BJ (cell line): ENCODE measurements at regions of chr12 and their contacts with region 1.

Region 1: DNA sequence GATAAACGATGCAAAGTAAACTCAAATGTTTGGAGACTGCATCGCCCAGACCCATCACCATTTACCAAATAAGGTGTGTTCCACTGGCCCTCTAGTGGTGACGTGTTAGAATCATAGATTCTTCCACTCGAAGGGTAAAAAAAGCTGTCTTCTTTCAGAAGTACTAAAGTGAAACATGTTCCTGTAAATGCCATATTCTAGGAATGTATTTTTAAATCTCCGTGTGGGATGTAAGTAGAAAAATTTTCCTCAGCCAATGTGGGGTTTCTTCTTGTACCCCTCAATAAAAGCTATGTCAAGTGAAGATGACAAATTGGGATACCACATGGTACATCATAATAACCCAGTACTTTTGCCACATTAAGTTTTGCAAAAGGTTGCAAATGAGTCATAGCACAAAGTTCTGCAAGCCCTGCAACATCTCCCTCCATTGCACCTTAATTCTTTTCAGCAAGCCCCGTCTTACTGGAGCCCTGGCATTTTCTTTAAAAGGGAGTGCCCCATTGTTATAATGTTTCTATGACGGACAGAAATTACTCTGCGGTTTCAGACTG is 100.8 kb downstream of the CCER1 start:
- DNase-seq: no peak
- H3K4me3 ChIP-seq: no peak overlapping the region
- H3K27me3 ChIP-seq: no peaks in the 10 kb centered on the region
- CTCF ChIP-seq: peak; percentile 84

Region 2: DNA sequence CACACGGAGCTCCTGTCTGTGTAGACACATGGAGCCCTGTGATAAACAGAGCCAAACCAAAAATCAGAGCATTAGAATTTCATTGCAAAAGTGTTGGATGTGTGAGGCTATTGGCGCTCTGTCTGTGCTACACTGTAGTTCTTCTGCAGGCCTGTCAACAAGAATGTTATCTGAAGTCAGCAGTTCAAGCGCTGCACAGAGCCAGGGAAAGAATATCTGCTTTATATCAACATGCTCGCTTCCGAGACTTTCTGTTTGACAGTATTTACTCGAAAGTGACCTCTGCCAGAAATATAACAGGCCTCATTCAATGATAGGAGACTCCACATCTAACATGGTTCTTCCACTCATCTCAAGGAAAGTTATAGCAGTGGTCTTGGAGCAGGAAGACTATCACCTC is 17.5 kb before region 1 on chr12:
- CTCF ChIA-PET with region 1: interaction called, 11 read pairs
- POLR2A ChIA-PET with region 1: interaction called, 4 read pairs
- DNase-seq: no peak
- H3K4me3 ChIP-seq: no peak overlapping the region
- H3K27me3 ChIP-seq: no peaks in the 10 kb centered on the region
- CTCF ChIP-seq: no peak

Region 3: DNA sequence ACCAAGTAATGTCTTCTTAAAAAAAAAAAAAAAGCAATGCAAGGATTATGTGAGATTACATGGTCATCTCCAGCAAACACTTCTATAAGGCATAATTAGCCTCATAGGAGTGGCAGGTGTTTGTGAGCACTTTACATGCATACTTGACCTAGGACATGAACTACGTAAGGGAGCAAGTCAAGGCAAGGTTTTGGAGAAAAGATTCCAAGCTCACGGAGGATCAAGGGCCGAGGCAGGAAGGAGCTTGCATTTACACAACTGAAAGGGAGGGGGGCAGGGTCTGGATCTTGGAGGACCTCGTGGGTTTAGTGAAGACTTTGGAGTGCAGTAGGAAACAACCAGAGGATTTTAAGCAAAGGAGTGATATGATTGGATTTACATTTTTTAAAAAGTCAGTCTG is 11.7 kb before region 1 on chr12:
- CTCF ChIA-PET with region 1: interaction called, 17 read pairs
- POLR2A ChIA-PET with region 1: no interaction called
- DNase-seq: no peak
- H3K4me3 ChIP-seq: no peak overlapping the region
- H3K27me3 ChIP-seq: no peaks in the 10 kb centered on the region
- CTCF ChIP-seq: no peak

Region 4: DNA sequence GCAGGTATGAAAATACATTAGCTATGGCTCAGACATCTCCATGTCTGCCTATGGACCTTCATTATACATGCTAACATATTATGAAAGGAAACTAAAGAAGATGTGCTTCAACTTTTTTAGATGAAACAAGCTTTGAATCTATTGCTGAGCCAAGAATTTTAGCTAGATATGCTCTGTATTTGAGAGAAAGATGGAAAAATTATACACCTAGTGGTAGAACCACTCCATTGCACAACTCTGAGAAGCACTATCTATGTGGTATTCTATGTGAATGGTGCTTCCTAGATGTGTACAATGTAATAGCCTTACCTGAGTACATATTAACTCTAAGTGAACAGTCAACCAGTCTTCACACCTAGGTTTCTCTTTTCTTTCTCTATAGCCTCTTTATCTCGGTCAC is 133.3 kb after region 1 on chr12:
- CTCF ChIA-PET with region 1: no interaction called
- POLR2A ChIA-PET with region 1: no interaction called
- DNase-seq: no peak
- H3K4me3 ChIP-seq: no peak overlapping the region
- H3K27me3 ChIP-seq: no peaks in the 10 kb centered on the region
- CTCF ChIP-seq: peak; percentile 21; the same call in 1 of the 2 replicates

Region 5: DNA sequence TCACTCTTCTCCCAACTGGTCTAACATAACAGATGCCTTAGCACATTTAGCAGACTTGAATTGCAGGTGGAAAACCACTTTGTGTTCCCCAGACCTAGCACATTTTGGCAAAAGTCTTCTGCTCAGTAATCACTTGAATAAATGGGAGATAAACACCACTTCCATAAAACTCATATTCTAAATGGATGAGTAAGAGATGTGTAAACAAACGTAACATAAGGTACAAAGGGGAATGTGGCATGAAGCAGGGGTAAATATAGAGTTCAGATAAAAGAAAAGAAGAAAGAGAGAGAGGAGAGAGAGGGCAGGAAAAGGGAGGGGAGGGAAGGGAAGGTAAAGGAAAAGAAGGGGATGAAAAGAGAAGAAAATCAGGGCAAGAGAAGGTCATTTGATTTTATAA is 220.6 kb after region 1 on chr12:
- CTCF ChIA-PET with region 1: no interaction called
- POLR2A ChIA-PET with region 1: no interaction called
- DNase-seq: no peak
- H3K4me3 ChIP-seq: no peak overlapping the region
- H3K27me3 ChIP-seq: no peaks in the 10 kb centered on the region
- CTCF ChIP-seq: no peak

Region 6: DNA sequence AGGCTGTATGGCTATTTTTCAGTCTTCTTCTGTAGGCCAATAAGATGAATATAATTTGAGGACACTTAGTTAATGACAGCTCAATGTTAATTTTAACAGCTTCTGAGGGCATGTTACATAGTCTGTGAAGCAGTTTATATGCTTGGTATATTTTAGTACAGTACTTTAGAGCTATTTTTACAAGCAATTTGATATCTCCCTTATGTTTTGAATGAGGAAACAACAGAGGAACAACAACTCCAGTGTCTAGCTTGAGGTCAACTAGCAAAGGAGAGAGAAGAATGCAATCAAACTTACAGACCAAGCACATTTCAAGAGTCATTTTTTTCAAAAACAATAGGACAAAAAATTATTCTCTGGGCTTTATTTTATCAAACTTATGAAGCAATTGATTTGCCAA is 797.5 kb after region 1 on chr12:
- CTCF ChIA-PET with region 1: no interaction called
- POLR2A ChIA-PET with region 1: no interaction called
- DNase-seq: no peak
- H3K4me3 ChIP-seq: no peak overlapping the region
- H3K27me3 ChIP-seq: no peaks in the 10 kb centered on the region
- CTCF ChIP-seq: no peak